GM23248 (cell line): ENCODE measurements at regions of chr9 and their contacts with region 1.

Region 1: GRCh38 chr9:22643541-22643940 is 196.9 kb downstream of the DMRTA1 start:
- DNase-seq: peak; percentile 50
- H3K4me3 ChIP-seq: no peak overlapping the region
- H3K27ac ChIP-seq: no peak overlapping the region; the same call in 1 of the 2 replicates
- H3K4me1 ChIP-seq: peaks cover 27% of the 10 kb centered on the region
- H3K27me3 ChIP-seq: no peaks in the 10 kb centered on the region

Region 2: GRCh38 chr9:22693156-22693555 is 49.6 kb after region 1 on chr9:
- in situ Hi-C with region 1: loop called (anchors 10 kb)
- DNase-seq: peak; percentile 39
- H3K4me3 ChIP-seq: no peak overlapping the region
- H3K27ac ChIP-seq: no peak overlapping the region
- H3K4me1 ChIP-seq: peaks cover 18% of the 10 kb centered on the region
- H3K27me3 ChIP-seq: no peaks in the 10 kb centered on the region

Region 3: DNA sequence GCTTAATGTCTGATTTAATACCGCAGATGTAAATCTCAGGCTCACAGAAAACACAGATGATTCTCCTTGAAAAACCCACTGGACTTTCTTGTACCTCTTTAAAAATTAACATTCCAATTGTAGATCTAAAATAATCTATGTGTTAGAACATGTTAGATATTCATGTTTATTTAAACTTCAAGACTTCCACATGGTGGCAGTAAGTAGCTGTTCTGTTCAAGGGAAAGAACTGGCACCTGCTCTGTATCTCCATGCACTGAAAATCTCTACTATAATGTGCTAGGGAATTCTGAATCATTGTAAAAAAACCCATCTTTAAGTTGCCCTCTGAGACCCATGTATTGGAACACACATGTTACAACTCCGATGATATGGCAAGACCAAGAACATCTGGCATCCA is 170.0 kb after region 1 on chr9:
- in situ Hi-C with region 1: no loop called
- DNase-seq: peak; percentile 67
- H3K4me3 ChIP-seq: no peak overlapping the region
- H3K27ac ChIP-seq: no peak overlapping the region
- H3K4me1 ChIP-seq: peaks cover 16% of the 10 kb centered on the region
- H3K27me3 ChIP-seq: no peaks in the 10 kb centered on the region